Calu3 (cell line): ENCODE measurements at regions of chr18 and their contacts with region 1.

Region 1: GRCh38 chr18:34787931-34788532 is 77.9 kb downstream of the DTNA start:
- DNase-seq: peak; percentile 32
- H3K4me3 Mint-ChIP-seq: no peak overlapping the region
- H3K27ac Mint-ChIP-seq: no peak overlapping the region
- H3K4me1 Mint-ChIP-seq: no peaks in the 10 kb centered on the region
- H3K27me3 Mint-ChIP-seq: no peaks in the 10 kb centered on the region
- CTCF ChIP-seq: peak; percentile 49

Region 2: DNA sequence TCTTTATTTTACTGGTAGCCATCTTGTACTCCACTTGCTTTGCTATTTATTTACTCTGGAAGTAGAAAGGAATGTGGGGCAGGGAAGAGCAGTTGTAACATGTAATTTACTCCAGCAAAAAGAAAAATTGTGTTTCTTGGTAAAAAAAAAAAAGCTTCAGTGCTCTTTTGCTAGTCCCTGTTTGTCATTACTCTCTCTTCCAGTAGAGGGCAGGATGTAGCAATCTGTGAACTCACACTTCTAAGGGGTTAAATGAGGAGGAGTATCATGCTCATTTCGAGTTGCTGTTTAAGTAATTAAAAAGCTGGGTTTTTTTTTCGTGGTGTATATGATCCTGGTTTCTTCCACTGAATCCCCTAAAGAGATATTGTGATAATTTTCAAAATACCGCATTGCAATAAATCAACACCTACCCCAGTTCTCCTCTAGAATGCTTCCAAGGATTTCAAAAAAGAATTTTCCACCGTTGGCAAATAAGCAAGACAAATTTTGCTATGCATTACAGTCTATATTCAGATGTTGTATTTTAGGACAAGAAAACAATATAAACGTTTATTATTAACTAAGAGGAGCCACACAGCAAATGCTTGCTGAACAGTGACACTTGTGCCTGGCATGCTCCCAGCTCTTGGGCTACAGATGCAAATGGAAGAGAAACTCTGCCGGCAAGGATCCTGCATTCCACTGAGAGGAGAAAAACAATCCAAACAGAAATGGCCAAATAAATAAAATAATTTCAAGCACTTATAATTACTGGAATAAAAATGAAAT is 948.4 kb before region 1 on chr18:
- CTCF ChIA-PET with region 1: no interaction called
- intact Hi-C with region 1: loop called (anchors 10 kb)
- DNase-seq: peak; percentile 38
- H3K4me3 Mint-ChIP-seq: no peak overlapping the region
- H3K27ac Mint-ChIP-seq: no peak overlapping the region
- H3K4me1 Mint-ChIP-seq: peaks cover 9% of the 10 kb centered on the region
- H3K27me3 Mint-ChIP-seq: no peaks in the 10 kb centered on the region
- CTCF ChIP-seq: peak; percentile 80

Region 3: DNA sequence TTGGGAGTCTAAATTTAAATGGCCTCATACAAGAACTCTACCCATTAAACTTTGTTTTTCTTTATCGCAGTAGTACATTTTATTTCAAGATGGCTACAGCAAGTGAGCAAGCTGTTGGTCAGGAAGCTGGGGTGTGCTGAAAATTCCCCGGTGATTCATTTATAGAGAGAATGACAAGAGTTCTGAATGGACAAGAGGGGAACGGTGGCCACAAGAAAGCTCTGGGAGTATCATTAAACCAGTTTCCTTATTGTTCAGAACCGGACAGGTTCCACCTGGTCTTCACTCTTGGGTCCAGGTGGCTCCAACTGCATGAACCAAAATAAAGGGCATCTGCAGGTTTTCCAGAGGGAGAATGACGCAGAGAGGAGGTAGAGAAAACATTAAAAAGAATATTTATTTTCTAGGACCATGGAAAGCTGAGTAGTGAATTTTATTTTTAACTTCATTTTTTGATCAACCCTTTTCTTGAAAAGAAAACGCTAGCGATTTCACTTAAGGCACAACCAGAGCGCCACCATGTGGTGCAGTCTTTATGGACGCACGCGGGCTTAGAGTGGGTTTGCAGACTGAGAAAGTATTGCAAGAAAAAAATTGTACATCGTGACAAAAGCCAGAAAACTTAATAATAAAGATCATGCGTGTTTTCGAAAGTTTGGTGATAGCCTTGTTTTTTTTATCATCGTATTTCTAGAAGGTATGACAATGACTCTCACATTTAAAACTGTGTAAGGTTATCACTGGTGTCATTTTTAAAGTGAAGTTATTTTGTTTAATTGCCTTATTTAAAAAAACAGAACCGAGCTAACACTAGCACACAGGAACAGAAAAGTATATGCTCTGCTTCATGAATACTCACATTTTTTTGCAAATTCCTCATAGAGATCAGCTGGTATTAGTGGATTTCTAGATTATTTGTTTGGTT is 465.4 kb before region 1 on chr18:
- CTCF ChIA-PET with region 1: no interaction called
- intact Hi-C with region 1: loop called (anchors 10 kb)
- DNase-seq: peak; percentile 62
- H3K4me3 Mint-ChIP-seq: peak overlapping the region; percentile 60
- H3K27ac Mint-ChIP-seq: peak overlapping the region; percentile 82
- H3K4me1 Mint-ChIP-seq: peaks cover 9% of the 10 kb centered on the region
- H3K27me3 Mint-ChIP-seq: no peaks in the 10 kb centered on the region
- CTCF ChIP-seq: peak; percentile 87

Region 4: GRCh38 chr18:34595673-34596303 is 192.2 kb before region 1 on chr18:
- CTCF ChIA-PET with region 1: interaction called, 3 read pairs
- intact Hi-C with region 1: loop called (anchors 1 kb)
- DNase-seq: peak; percentile 22
- H3K4me3 Mint-ChIP-seq: no peak overlapping the region
- H3K27ac Mint-ChIP-seq: no peak overlapping the region
- H3K4me1 Mint-ChIP-seq: no peaks in the 10 kb centered on the region
- H3K27me3 Mint-ChIP-seq: no peaks in the 10 kb centered on the region
- CTCF ChIP-seq: peak; percentile 29

Region 5: DNA sequence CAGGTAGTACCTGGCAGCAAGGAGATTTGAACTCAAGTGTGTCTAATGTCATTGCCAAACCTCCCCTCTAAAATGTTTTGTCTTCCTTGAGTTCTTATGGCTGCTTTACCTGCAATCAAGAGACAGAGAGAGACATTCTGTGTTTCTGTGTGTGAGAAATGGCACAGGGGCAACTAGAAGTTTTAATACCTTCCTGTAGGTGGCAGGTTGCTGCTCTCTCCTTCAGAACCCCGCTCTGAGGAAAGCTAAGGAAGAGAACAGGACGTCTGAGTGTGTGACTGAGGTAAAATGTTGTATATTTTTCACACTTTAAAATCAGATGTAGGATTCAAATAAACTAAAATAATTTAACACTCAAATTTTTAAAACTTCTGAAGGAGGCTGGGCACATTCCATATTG is 58.8 kb before region 1 on chr18:
- CTCF ChIA-PET with region 1: interaction called, 5 read pairs
- intact Hi-C with region 1: loop called (anchors 1 kb)
- DNase-seq: peak; percentile 50
- H3K4me3 Mint-ChIP-seq: no peak overlapping the region
- H3K27ac Mint-ChIP-seq: no peak overlapping the region
- H3K4me1 Mint-ChIP-seq: peaks cover 20% of the 10 kb centered on the region
- H3K27me3 Mint-ChIP-seq: no peaks in the 10 kb centered on the region
- CTCF ChIP-seq: peak; percentile 25

Region 6: GRCh38 chr18:34999756-35000289 is 211.8 kb after region 1 on chr18:
- CTCF ChIA-PET with region 1: no interaction called
- intact Hi-C with region 1: no loop called
- DNase-seq: no peak
- H3K4me3 Mint-ChIP-seq: no peak overlapping the region
- H3K27ac Mint-ChIP-seq: no peak overlapping the region
- H3K4me1 Mint-ChIP-seq: no peaks in the 10 kb centered on the region
- H3K27me3 Mint-ChIP-seq: no peaks in the 10 kb centered on the region
- CTCF ChIP-seq: no peak